HepG2 (cell line): ENCODE measurements at regions of chr22 and their contacts with region 1.

Region 1: GRCh38 chr22:50612528-50613221 is 12.1 kb downstream of the MAPK8IP2 start:
- DNase-seq: no peak
- ATAC-seq: peak; percentile 47
- H3K4me3 ChIP-seq: peak overlapping the region in 1 of 3 experiments; percentile 71; a peak in 1 of 6 replicates
- H3K27ac ChIP-seq: peak overlapping the region; percentile 28
- H3K4me1 ChIP-seq: peaks cover 22% of the 10 kb centered on the region
- H3K27me3 ChIP-seq: peaks cover 0 to 6% of the 10 kb centered on the region in 2 experiments; a peak in 1 of 5 replicates
- CTCF ChIP-seq: no peak
- EP300 ChIP-seq: no peak
- POLR2A ChIP-seq: no peak
- RAD21 ChIP-seq: no peak; the same call in 1 of the 2 replicates

Region 2: DNA sequence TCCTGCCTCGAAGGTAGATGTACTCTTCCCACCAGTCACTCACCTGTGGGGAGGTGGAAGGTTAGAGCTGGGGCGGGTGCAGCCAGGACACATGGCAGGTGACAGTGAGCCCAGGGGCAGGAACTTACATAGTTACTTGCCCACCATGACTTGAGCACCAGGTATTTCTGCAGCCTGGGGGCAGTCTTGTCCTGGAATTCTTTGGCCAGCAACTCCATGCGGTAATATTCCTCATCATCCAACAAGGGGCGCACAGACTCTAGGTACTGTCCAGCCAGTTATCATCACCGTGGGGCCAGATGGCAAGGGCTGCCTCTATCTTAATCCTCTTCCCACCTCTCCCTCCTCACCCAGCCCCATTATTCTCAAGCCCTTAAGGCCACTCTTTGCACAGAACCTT is 36.6 kb before region 1 on chr22:
- CTCF ChIA-PET with region 1: no interaction called
- POLR2A ChIA-PET with region 1: no interaction called
- in situ Hi-C with region 1: loop called (anchors 5 kb)
- intact Hi-C with region 1: no loop called
- DNase-seq: peak; percentile 81
- ATAC-seq: peak; percentile 83
- H3K4me3 ChIP-seq: no peak overlapping the region
- H3K27ac ChIP-seq: no peak overlapping the region
- H3K4me1 ChIP-seq: peaks cover 2% of the 10 kb centered on the region
- H3K27me3 ChIP-seq: no peaks in the 10 kb centered on the region
- CTCF ChIP-seq: peak; percentile 81
- EP300 ChIP-seq: no peak
- POLR2A ChIP-seq: no peak
- RAD21 ChIP-seq: peak; percentile 94

Region 3: DNA sequence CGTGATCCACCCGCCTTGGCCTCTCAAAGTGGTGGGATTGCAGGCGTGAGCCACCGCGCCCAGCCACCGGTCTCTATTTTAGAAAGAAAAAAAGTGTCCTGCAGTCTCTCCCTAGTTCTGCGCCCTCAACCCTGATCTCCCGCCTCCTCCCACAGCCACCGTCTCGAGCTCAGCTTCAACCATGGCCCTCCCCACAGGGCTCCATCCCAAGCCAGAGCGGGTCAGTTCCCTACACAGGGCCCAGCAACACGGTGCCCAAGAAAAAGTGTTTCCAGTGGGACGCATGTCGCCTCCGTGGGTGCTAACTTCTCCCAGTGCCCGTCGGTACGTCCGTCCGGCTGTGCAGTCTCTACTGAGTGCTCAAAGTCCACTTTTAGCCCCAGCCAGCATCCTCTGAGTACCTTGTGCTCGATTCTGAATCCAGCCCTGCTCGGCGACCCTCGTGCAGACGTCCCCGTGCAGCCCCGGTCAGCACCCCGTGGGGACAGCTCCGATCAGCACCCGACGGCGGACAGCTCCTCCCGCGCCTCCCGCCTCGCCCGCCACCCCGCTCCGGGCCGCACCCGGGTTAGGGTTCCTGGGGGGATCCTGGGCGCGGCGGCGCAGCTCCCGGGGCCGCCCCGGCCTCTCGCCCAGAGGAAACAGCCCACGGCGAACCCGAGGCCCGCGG is 12.8 kb before region 1 on chr22:
- CTCF ChIA-PET with region 1: no interaction called
- POLR2A ChIA-PET with region 1: no interaction called
- in situ Hi-C with region 1: no loop called
- intact Hi-C with region 1: no loop called
- DNase-seq: peak; percentile 9
- ATAC-seq: peak; percentile 77
- H3K4me3 ChIP-seq: peak overlapping the region in 2 of 3 experiments; percentile 27 to 70; a peak in 3 of 6 replicates
- H3K27ac ChIP-seq: no peak overlapping the region
- H3K4me1 ChIP-seq: peaks cover 15% of the 10 kb centered on the region
- H3K27me3 ChIP-seq: peaks cover 0 to 2% of the 10 kb centered on the region in 2 experiments; a peak in 2 of 5 replicates
- CTCF ChIP-seq: 0 out of 2 replicates have a peak, but pooled peaks have one; percentile 12
- EP300 ChIP-seq: no peak
- POLR2A ChIP-seq: no peak
- RAD21 ChIP-seq: peak; percentile 32; the same call in 1 of the 2 replicates